Dorsolateral prefrontal cortex (tissue), 120 donors: ENCODE measurements at regions of chr12 and their contacts with region 1.

Region 1: DNA sequence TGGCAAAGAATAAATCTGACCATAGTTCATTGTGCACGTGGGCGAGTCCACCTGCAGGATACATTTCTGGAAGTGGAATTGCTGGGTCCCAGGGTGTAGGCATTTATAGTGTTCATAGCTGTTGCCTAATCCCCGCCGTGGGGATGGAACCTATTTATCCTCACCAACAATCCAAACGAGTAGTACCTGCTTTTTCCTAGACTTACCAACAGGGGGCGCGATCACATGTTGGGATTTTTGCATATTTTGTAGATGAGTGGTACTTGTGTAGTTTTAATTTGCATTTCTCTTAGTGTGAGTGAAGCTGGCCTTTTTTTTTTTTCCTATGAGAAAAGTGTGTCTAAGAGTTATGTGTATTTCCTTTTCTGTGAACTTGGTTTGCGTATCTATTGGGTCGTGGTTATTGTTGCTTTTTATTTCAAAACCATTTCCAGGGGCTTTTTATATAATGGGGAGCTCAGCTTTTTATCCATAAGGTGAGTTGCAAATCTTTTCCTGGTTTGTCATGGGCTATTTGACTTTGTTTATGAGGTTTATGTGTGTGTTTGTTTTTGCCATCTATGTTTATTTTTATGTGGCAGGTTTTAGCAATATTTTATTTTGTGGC is 67.2 kb downstream of the CCDC92 start:
- DNase-seq: peak in 6 of 10 donors; percentile 33 to 71 (median 53)
- H3K4me3 ChIP-seq: no peak overlapping the region
- H3K27ac ChIP-seq: no peak overlapping the region
- H3K27me3 ChIP-seq: no peaks in the 10 kb centered on the region
- CTCF ChIP-seq: peak; percentile 70 to 91 (median 85)

Region 2: DNA sequence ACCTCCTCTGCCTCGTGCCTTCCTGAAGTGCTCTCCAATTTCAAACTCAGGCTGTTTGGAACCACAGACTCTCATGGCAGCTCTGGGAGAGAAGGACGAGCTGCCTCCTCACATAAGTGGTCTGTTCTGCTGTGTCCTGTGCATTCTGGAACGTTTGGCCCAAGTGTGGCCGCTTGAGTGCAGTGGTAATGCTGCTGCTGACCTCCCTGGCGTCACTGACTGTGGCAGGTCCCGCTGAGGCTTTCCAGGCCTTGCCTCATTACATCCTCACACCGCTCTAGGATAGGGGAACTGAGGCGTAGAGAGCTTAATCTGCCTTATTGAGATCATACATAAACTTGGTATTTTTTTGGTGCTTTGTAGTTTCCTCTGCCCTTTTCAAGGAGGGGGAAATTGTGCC is 53.0 kb after region 1 on chr12:
- intact Hi-C with region 1: no loop called
- DNase-seq: no peak
- H3K4me3 ChIP-seq: no peak overlapping the region
- H3K27ac ChIP-seq: no peak overlapping the region
- H3K27me3 ChIP-seq: no peaks in the 10 kb centered on the region
- CTCF ChIP-seq: no peak

Region 3: DNA sequence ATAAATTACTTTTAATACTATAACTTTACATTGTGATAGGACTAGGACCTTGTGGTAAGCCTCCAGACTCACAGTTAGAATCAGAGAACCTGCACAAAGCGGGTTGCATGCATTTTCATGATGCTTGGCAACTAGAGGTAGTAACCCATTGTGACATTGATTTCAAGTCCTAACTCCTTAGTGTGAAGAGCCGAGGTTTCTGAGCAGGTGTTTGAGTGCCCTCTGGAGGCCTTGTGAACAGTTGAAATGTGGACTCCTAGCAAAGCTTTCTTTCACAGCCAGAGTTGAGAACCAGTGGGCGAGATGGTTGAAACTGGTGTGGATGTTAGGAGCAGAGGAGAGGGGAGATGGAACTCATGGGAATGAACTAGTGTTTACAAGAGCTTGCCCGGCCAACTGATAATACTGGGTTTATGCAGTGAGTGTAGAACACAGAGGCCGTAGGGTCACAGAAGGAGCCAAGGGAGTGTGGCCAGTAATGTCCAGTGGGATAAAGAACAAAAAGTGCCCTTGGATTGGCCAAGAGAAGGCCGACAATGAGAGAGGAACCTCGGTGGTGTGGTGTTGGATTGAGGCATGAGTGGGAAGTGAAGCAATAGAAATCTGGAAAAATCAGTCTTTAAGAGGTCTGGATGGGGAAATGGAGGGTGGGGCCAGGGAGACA is 78.5 kb after region 1 on chr12:
- intact Hi-C with region 1: loop called (anchors 5 kb)
- DNase-seq: peak in 6 of 10 donors; percentile 30 to 69 (median 58)
- H3K4me3 ChIP-seq: no peak overlapping the region
- H3K27ac ChIP-seq: peak overlapping the region in 23 of 59 donors; percentile 1 to 70 (median 32)
- H3K27me3 ChIP-seq: no peaks in the 10 kb centered on the region
- CTCF ChIP-seq: peak in 55 of 56 donors; percentile 26 to 83 (median 68)

Region 4: DNA sequence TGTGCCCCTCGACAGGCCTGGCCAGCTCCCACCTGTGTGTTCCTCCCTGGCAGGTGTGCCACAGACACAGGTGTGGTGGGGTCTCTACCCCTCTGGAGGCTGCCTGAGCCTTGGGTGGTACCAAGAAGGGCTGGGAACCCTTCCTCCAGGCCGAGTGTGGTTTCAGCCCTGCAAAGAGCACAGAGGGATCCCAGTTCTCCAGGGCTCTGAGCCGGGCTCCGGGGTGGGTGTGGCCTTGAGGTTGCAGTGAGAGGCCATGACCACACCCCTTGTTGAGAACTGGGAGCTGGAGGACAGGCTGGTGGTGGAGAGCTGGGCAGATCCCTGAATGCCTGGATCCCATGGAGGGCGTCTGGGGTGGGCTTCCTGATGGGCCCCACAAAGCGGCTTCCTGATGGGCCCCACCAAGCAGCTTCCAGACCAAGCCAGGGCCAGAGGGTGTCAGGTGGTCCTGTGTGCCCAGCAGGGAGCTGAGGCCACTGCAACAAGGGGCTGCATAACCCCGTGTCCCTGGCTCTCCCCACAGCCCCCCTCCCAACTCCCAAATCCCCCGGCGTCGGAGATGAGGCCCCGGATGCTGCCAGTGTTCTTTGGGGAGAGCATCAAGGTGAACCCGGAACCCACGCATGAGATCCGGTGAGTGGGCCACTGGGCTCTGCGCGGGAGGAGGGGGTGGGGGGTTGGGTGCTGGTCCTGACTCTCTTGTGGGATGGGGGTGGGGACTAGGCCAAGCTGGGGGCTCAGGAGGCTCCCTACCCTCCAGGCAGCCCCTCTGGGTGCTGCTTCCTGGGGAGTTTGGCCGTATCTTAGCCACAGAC is 406.1 kb after region 1 on chr12:
- intact Hi-C with region 1: loop called in 1 of 2 experiments (anchors 10 kb)
- DNase-seq: no peak
- H3K4me3 ChIP-seq: no peak overlapping the region
- H3K27ac ChIP-seq: no peak overlapping the region
- H3K27me3 ChIP-seq: no peaks in the 10 kb centered on the region
- CTCF ChIP-seq: no peak